Sciatic nerve (tissue), 2 donors: ENCODE measurements at regions of chr17 and their contacts with region 1.

Region 1: DNA sequence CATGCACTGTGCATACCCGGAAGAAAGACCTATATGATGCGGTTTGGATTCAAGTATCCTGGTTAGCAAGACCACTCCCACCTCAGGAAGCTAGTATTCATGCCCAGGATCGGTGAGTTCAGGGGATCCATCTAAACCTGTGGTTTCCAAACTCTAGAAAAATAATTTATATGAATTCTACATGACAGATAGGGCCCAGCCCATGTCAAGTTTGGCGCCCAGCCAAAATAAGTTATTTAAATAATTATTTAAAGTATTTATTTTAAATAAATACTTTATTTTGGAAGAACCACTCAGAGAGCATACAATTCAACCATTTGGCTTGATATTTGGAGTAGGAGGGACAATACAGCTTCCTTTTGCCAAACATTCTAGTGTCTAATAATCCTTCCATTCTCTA is 36.2 kb downstream of the ZNF594 start:
- DNase-seq: no peak
- ATAC-seq: no peak

Region 2: DNA sequence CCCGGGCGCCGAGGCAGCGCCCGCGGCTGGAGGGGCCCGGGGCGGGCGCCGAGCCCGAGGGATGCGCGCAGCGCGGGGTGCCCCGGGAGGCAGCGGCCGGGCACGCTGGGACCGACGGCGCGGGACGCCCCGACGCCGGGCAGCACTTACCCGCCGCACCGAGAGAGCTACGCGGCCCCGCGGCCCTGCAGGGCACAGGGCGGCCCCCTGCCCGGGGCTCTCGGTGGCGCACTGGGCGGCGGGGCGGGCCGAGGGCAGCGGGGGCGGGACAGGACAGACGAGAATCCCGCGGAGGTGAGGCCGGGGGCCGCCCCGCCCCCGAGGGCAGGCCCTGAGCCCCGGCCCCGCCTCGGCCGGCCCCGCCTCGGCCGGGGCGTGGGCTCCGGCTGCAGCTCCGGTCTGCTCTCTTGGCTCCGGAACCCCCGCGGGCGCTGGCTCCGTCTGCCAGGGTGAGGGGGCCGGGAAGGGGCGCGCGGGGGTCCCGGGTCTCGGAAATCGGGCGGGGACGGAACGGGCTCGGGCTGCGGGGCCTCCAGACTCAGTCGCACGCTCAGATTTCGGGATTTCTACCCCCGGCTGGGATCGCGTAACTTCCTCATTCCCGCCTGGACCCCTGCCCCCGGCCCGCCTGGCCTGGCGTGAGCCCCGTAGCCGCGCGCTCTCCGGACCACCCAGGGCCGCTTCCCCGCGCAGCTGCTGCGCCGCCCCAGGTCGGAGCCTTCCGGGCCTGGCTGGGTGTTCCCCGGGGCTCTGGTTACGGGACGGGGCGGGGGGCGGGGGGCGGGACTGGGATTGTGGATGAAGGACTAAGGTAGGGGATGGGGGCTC is 348.5 kb before region 1 on chr17 and contains the start of gene PLD2:
- intact Hi-C with region 1: no loop called
- DNase-seq: peak; percentile 90
- ATAC-seq: peak; percentile 97
- total RNA-seq, gene PLD2: 47.0 TPM

Region 3: GRCh38 chr17:5135726-5136579 is 19.5 kb before region 1 on chr17:
- intact Hi-C with region 1: loop called (anchors 2 kb)
- DNase-seq: peak; percentile 48
- ATAC-seq: no peak

Region 4: GRCh38 chr17:5210614-5211252 is 55.2 kb after region 1 on chr17:
- intact Hi-C with region 1: no loop called
- DNase-seq: no peak
- ATAC-seq: peak; percentile 62